Heart left ventricle (tissue), 16 donors: ENCODE measurements at regions of chr15 and their contacts with region 1.

Region 1: DNA sequence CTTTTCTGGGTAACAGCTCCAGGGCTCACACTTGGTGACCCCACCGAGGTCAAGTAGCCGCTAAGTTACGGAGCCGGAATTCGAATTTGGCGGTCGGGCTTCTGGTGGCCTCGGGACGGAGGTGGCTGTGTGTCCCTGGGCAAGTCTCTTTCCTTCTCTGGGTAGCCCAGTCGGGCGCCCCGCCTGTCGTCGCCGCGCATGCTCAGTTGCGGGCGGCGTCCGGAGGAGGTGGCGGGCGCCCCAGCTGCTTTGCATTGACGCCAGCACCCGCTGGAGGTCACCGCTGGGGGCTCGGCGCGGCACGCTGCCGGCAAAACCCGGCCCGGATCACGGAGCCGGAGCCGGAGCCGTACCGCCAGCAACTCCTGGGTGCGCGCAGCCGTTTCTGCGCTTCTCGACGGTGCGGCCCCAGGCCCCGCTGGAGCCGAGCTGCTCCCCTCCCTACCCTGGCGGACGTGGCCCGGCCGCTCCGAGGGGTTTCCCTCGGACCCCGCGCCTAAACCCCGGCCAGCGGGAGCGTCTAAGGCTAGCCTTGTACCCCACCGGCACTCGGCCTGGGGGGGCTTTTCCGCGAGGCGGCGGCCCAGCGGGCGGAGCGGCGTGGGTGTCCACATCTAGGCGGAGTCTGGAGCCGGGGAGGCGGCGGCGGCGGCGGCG is 474 bp upstream of the PDE8A start:
- DNase-seq: peak; percentile 96 to 99 (median 97)
- ATAC-seq: peak; percentile 87 to 93 (median 91)
- H3K4me3 ChIP-seq: peak overlapping the region; percentile 64 to 96 (median 84)
- H3K27ac ChIP-seq: peak overlapping the region; percentile 84 to 98 (median 95)
- H3K4me1 ChIP-seq: peaks cover 0 to 46% (median 28%) of the 10 kb centered on the region in 12 donors
- H3K27me3 ChIP-seq: no peaks in the 10 kb centered on the region
- CTCF ChIP-seq: peak in 10 of 12 donors; percentile 15 to 51 (median 34)
- POLR2A ChIP-seq: peak in 1 of 2 donors; percentile 39

Region 2: DNA sequence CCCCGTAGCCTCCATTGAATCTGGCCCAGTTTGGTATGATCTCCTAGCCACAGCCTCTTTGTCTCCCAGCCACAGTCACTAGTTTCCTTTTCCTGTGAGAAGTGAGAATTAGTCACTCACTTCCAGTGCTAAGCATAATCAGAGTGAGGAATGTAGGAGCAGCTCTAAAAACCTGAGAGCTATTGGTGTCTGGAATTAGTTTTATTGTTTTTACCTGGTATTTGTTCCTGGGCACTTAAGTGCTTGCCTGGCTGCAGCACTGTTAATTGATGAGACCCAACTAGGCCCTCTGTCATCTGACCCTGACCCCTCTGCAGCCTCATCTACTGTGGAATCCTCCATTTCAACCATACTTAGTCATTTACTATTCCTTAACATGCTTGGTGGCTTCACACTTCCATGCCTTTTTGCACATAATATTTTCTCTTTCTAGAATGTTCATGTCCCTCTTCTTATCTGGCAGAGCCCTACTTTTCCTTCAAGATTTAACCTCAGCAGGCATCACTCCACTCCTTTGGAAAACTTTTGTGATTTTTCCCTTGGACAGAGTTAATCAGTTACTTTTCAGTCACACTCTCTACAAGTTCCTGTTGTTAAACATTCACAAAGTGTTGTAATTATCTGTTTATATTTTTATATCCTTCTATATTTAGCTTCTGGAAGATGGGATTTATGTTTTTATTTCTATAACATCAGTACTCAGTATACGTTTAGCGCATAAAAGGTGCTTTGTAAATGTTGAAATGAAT is 49.3 kb after region 1 on chr15:
- intact Hi-C with region 1: loop called in 6 of 10 experiments (anchors 5 kb)
- DNase-seq: no peak
- ATAC-seq: peak in 2 of 4 donors; percentile 14 to 58
- H3K4me3 ChIP-seq: no peak overlapping the region
- H3K27ac ChIP-seq: peak overlapping the region in 6 of 12 donors; percentile 8 to 33 (median 28)
- H3K4me1 ChIP-seq: peaks cover 6 to 85% (median 61%) of the 10 kb centered on the region in 12 donors
- H3K27me3 ChIP-seq: no peaks in the 10 kb centered on the region
- CTCF ChIP-seq: no peak
- POLR2A ChIP-seq: no peak

Region 3: DNA sequence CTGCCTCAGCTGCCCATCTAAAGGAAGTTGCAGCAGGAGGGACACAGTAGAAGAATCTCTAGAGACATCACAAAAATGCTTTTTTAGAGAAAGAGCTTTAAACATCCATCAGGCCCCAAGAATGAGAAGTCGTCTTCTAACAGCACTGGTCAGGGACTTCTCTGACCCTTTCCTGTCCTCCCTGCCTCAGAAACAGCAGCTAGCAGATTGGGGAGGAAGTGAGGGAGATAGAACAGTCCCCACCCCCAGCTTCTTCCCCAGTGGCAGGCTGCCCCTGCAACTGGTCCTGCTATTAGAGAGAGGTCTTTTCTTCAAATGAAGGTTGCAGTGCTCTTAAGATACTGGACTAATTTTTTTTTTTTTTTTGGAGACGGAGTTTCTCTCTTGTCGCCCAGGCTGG is 55.5 kb after region 1 on chr15:
- intact Hi-C with region 1: loop called in 4 of 10 experiments (anchors 2 to 5 kb)
- DNase-seq: peak in 1 of 5 donors; percentile 38
- ATAC-seq: peak in 3 of 4 donors; percentile 59 to 71 (median 70)
- H3K4me3 ChIP-seq: no peak overlapping the region
- H3K27ac ChIP-seq: peak overlapping the region in 3 of 12 donors; percentile 3 to 40 (median 9)
- H3K4me1 ChIP-seq: peaks cover 0 to 57% (median 26%) of the 10 kb centered on the region in 12 donors
- H3K27me3 ChIP-seq: no peaks in the 10 kb centered on the region
- CTCF ChIP-seq: no peak
- POLR2A ChIP-seq: no peak